ENCODE measurements at regions of chr2 and their contacts with region 1.

Region 1: DNA sequence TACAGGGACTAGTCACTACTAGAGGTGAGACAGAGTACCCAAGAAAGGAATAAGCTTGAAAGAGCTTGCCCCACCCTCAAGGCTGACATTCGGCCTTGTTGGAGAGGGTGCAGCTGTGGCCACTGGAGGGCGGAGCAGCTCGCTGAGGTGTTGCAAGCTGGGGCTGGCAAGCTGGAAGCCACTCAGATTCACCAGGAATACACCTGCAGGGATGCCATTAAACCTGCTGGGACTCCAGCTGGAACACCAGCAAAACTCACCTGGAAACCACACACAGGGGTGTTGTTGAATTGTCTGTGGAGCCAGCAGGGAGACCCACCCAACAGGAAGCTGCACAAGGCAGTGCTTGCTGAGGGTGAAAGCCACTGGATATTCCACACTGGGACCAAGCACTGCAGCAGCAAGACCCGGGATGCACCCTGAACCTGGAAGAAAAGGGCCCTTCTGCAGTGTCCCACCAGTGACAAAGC is 26.1 kb downstream of the KCTD18 start:
- DNase-seq: peak; percentile 64
- ATAC-seq: peak; percentile 86
- H3K4me3 ChIP-seq: no peak overlapping the region
- H3K27ac ChIP-seq: no peak overlapping the region
- H3K4me1 ChIP-seq: peaks cover 68% of the 10 kb centered on the region
- H3K27me3 ChIP-seq: no peaks in the 10 kb centered on the region
- CTCF ChIP-seq: peak; percentile 90
- EP300 ChIP-seq: 0 out of 4 replicates have a peak, but pooled peaks of 1 of the 2 experiments have one; percentile 30
- POLR2A ChIP-seq: peak in 1 of 2 experiments; percentile 45; a peak in 2 of 4 replicates
- RAD21 ChIP-seq: peak; percentile 62

Region 2: GRCh38 chr2:200509612-200510433 is 26.1 kb after region 1 on chr2 and contains the start of gene KCTD18:
- CTCF ChIA-PET with region 1: interaction called, 5 read pairs
- POLR2A ChIA-PET with region 1: interaction called, 9 read pairs
- in situ Hi-C with region 1: no loop called
- intact Hi-C with region 1: loop called (anchors 2 kb)
- DNase-seq: peak; percentile 84
- ATAC-seq: peak; percentile 96
- H3K4me3 ChIP-seq: peak within 1 kb of the TSS; percentile 89 to 98 (median 94)
- H3K27ac ChIP-seq: peak within 1 kb of the TSS; percentile 69
- H3K4me1 ChIP-seq: peaks cover 23% of the 10 kb centered on the region
- H3K27me3 ChIP-seq: peaks cover 0 to 8% of the 10 kb centered on the region in 2 experiments; a peak in 1 of 5 replicates
- CTCF ChIP-seq: peak; percentile 93
- EP300 ChIP-seq: peak in 1 of 2 experiments; percentile 61; a peak in 3 of 4 replicates
- POLR2A ChIP-seq: peak; percentile 77 to 81
- RAD21 ChIP-seq: peak; percentile 94
- total RNA-seq, gene KCTD18: 7.0 and 7.1 TPM in 2 replicates

Region 3: DNA sequence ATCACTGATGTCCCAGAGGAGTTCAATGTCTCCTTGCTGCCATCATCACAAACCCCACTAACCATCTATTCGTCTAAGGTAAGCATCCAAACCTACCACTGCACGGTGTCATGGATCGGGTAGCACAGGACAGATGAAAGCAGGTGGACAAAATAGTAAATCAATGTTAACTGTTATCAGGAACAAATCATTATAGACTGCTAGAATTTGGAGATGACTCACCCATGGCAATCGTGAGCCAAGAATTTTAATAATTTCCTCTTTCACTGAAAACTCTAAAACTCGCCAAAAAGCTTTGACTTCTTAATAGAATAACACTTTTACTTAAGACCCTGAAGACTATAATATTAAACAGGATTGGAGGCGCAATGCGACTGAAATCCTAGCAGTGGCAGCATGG is 294.3 kb after region 1 on chr2:
- CTCF ChIA-PET with region 1: no interaction called
- POLR2A ChIA-PET with region 1: no interaction called
- in situ Hi-C with region 1: no loop called
- intact Hi-C with region 1: no loop called
- DNase-seq: no peak
- ATAC-seq: no peak
- H3K4me3 ChIP-seq: no peak overlapping the region
- H3K27ac ChIP-seq: no peak overlapping the region
- H3K4me1 ChIP-seq: peaks cover 30% of the 10 kb centered on the region
- H3K27me3 ChIP-seq: no peaks in the 10 kb centered on the region; a peak in 2 of 5 replicates
- CTCF ChIP-seq: no peak
- EP300 ChIP-seq: no peak
- POLR2A ChIP-seq: no peak
- RAD21 ChIP-seq: no peak

Region 4: DNA sequence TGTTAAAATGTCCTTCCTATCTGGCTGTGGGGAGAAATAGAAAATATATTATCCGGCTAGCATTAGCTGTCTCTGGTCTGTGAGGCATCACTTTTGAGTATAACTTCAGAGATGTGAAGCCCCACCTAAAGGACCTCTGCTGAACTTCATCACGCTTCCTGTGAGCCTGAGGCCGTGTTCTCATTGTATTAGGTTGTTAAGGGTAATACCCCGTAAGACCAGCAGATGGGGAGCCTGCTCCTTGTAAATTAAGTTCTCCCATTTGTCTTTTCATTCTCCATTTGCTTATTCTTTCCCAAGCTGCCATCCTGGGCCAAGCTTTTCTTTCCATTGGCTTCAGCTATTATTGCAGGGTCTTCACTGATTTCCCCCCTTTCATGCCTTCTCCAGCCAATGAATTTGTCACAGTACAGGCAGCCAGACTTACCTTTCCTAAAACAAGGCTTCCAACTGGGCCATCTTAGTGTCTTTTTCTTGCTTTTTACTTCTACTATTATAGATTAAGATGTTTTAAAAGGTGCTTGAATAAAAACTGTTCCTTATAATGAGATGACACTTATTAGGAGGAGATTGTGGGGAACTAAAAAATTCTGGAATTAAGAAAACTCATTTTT is 417.8 kb after region 1 on chr2:
- CTCF ChIA-PET with region 1: no interaction called
- POLR2A ChIA-PET with region 1: no interaction called
- in situ Hi-C with region 1: no loop called
- intact Hi-C with region 1: no loop called
- DNase-seq: peak; percentile 94
- ATAC-seq: peak; percentile 97
- H3K4me3 ChIP-seq: no peak overlapping the region
- H3K27ac ChIP-seq: no peak overlapping the region
- H3K4me1 ChIP-seq: no peaks in the 10 kb centered on the region
- H3K27me3 ChIP-seq: no peaks in the 10 kb centered on the region
- CTCF ChIP-seq: peak; percentile 92
- EP300 ChIP-seq: no peak
- POLR2A ChIP-seq: no peak
- RAD21 ChIP-seq: peak; percentile 87